AG04450 (cell line): ENCODE measurements at regions of chr1 and their contacts with region 1.

Region 1: DNA sequence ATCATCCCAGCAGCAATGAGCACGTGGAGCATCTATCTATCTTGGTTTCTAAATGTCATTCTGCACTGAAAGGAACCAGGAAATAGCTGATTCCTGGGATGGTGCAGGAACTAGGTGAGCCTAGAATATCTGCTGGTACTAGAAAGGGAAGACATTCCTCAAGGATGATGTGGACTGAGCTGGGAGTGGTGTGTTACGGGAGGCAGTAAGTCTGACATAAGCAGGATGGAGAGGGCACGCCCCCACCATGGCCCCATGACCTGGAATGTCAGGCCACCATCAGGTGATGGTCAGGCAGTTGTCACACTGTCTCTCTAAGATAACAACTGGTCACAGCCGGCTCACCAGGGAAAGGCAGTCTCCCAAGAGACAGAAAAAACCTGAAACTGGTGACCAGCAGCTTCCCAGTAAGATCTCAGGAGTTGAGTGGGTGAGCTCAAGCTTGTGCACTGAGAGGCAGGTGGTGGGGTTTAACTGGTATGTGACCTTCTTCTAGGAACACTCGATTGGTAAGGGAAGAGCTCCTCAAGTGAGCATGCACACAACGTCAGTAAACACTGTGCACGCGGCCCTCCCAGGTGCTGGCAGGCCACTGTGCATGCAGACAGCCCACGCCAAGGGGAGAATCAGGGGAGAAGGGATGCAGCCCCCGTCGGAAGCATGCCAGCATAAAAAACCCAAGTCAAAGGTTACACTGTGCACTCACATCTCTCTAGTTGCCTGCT is 148.7 kb downstream of the ADSS2 start:
- DNase-seq: no peak
- H3K4me3 ChIP-seq: no peak overlapping the region
- H3K27ac ChIP-seq: no peak overlapping the region
- H3K27me3 ChIP-seq: no peaks in the 10 kb centered on the region
- CTCF ChIP-seq: no peak

Region 2: GRCh38 chr1:243335292-243335691 is 967.8 kb before region 1 on chr1:
- CTCF ChIA-PET with region 1: interaction called, 11 read pairs
- POLR2A ChIA-PET with region 1: no interaction called
- DNase-seq: no peak
- H3K4me3 ChIP-seq: no peak overlapping the region
- H3K27ac ChIP-seq: no peak overlapping the region
- H3K27me3 ChIP-seq: no peaks in the 10 kb centered on the region
- CTCF ChIP-seq: no peak

Region 3: GRCh38 chr1:243713470-243714186 is 589.4 kb before region 1 on chr1:
- CTCF ChIA-PET with region 1: interaction called, 21 read pairs
- POLR2A ChIA-PET with region 1: no interaction called
- DNase-seq: no peak
- H3K4me3 ChIP-seq: peak overlapping the region; percentile 11; the same call in 1 of the 2 replicates
- H3K27ac ChIP-seq: no peak overlapping the region
- H3K27me3 ChIP-seq: no peaks in the 10 kb centered on the region
- CTCF ChIP-seq: no peak

Region 4: GRCh38 chr1:244256086-244256676 is 46.9 kb before region 1 on chr1:
- CTCF ChIA-PET with region 1: no interaction called
- POLR2A ChIA-PET with region 1: no interaction called
- DNase-seq: no peak
- H3K4me3 ChIP-seq: no peak overlapping the region
- H3K27ac ChIP-seq: no peak overlapping the region
- H3K27me3 ChIP-seq: no peaks in the 10 kb centered on the region
- CTCF ChIP-seq: no peak

Region 5: GRCh38 chr1:244289976-244290375 is 13.1 kb before region 1 on chr1:
- CTCF ChIA-PET with region 1: interaction called, 51 read pairs
- POLR2A ChIA-PET with region 1: no interaction called
- DNase-seq: no peak
- H3K4me3 ChIP-seq: no peak overlapping the region
- H3K27ac ChIP-seq: no peak overlapping the region
- H3K27me3 ChIP-seq: peaks cover 3% of the 10 kb centered on the region
- CTCF ChIP-seq: no peak

Region 6: GRCh38 chr1:244414543-244414942 is 111.5 kb after region 1 on chr1:
- CTCF ChIA-PET with region 1: interaction called, 17 read pairs
- POLR2A ChIA-PET with region 1: no interaction called
- DNase-seq: peak; percentile 8
- H3K4me3 ChIP-seq: no peak overlapping the region
- H3K27ac ChIP-seq: no peak overlapping the region
- H3K27me3 ChIP-seq: no peaks in the 10 kb centered on the region
- CTCF ChIP-seq: peak; percentile 43

Region 7: DNA sequence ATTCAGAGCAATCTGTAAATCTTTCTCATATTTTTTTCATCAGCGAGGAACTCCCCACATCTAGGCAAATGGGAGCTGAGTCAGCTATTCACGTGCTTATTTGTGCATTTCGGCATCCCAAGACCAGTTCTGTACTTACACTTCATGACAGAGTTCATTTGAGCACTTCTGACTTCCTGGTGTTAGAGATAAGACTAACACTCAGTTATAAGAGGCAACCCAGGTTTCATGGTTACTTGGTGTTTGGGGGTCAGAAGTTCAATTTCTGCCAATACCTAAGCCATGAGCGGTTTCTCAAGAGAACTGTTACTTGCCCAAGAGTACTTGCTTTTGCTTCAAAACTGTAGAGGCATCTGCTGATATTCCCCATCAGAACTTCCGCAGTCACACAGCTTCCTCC is 325.7 kb after region 1 on chr1:
- CTCF ChIA-PET with region 1: no interaction called
- POLR2A ChIA-PET with region 1: no interaction called
- DNase-seq: no peak
- H3K4me3 ChIP-seq: no peak overlapping the region
- H3K27ac ChIP-seq: no peak overlapping the region
- H3K27me3 ChIP-seq: peaks cover 3% of the 10 kb centered on the region
- CTCF ChIP-seq: no peak

Region 8: GRCh38 chr1:244665771-244666217 is 362.7 kb after region 1 on chr1:
- CTCF ChIA-PET with region 1: no interaction called
- POLR2A ChIA-PET with region 1: no interaction called
- DNase-seq: no peak
- H3K4me3 ChIP-seq: no peak overlapping the region
- H3K27ac ChIP-seq: no peak overlapping the region
- H3K27me3 ChIP-seq: no peaks in the 10 kb centered on the region
- CTCF ChIP-seq: no peak